ENCODE measurements at regions of chr7 and their contacts with region 1.

Region 1: DNA sequence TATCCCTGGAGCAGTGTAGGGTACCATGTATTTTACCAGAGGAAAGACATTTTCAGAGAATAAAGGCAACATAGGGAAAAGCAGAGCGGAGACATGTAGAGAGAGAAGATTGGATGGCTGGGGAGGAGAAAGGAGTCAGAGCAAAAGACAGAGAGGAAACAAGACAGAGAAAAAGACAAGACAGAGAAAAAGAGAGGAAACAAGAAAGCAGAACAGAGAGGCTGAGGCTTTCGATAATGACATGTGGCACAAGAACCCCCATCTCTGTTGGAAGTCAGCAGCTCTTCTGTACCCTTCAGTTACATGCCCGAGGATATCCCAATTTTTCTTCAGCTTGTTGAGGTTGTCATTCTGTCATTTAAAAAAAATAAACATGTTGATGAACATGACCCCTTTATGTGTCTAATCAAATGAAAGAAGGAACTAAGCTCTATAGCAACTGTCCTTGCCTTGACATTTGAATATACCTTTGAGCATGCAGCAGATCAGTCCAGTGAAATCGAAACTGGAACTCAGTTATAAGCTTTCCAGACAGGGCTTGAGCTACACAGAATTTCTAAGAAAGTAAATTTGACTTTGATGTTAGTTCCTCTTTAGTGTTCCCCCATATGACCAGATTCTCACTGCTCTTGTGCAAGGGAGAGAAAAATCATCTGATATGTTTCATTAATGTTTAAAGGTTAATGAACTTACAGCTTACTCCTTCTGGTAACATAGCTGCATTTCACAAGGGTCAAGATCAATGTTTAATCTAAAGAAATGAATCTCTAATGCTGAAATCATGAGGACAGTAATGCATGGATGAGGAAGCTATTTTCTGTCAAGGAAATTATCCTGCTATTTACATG is 75.1 kb upstream of the SP4 start:
- DNase-seq: no peak
- H3K4me3 Mint-ChIP-seq: no peak overlapping the region
- H3K27ac Mint-ChIP-seq: peak overlapping the region; percentile 24
- H3K4me1 Mint-ChIP-seq: peaks cover 46% of the 10 kb centered on the region
- H3K27me3 Mint-ChIP-seq: no peaks in the 10 kb centered on the region

Region 2: DNA sequence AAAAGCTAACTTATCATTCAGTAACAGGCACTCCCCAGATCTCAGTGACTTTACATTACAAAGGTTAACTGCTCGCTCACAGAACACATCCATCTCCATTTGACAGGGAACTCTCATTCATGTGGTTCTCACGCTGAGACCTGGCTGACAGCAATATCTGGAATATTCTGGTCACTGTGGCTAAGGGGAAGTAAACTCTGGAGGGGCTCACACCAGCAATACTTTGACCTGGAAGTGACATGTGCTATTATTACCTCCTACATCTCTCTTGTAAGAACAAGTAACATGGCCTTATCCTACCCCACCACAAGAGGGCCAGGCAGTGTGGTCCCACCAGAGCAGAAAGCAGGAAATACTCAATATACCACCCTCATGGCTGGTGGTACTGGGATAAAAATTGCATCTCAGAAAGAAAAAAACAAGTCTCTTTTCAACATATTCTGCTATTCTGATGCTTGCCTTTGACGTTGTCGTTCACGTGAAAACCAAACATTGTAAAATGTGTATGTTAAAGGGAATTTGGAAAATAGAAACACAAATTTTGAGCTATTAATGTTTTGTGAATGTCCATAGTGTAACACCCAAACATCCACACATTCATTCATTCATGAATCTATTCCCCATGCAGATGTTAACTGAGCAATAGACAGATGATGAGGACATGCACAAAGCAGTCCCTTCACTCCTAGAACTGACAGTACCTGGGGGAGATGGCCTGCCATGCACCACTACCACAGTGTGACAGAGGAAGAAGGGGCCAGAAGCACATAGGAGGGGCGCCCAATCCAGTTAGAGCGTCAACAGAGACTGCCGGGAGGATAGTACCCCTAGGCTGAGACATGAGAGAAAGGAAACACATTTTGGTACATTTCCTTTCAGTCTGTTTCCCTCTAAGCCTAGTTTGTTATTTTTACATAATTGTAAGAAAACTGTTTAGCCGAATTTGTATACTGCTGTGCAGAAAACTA is 90.9 kb before region 1 on chr7:
- CTCF ChIA-PET with region 1: no interaction called
- intact Hi-C with region 1: loop called (anchors 5 kb)
- DNase-seq: peak; percentile 62
- H3K4me3 Mint-ChIP-seq: no peak overlapping the region
- H3K27ac Mint-ChIP-seq: no peak overlapping the region
- H3K4me1 Mint-ChIP-seq: peaks cover 7% of the 10 kb centered on the region
- H3K27me3 Mint-ChIP-seq: peaks cover 9% of the 10 kb centered on the region

Region 3: GRCh38 chr7:21300692-21301091 is 52.1 kb before region 1 on chr7:
- CTCF ChIA-PET with region 1: no interaction called
- intact Hi-C with region 1: loop called (anchors 1 kb)
- DNase-seq: no peak
- H3K4me3 Mint-ChIP-seq: no peak overlapping the region
- H3K27ac Mint-ChIP-seq: no peak overlapping the region
- H3K4me1 Mint-ChIP-seq: peaks cover 12% of the 10 kb centered on the region
- H3K27me3 Mint-ChIP-seq: no peaks in the 10 kb centered on the region

Region 4: GRCh38 chr7:21338728-21339164 is 14.0 kb before region 1 on chr7:
- CTCF ChIA-PET with region 1: interaction called, 5 read pairs
- intact Hi-C with region 1: loop called (anchors 1 kb)
- DNase-seq: peak; percentile 80
- H3K4me3 Mint-ChIP-seq: peak overlapping the region; percentile 1
- H3K27ac Mint-ChIP-seq: peak overlapping the region; percentile 94
- H3K4me1 Mint-ChIP-seq: peaks cover 20% of the 10 kb centered on the region
- H3K27me3 Mint-ChIP-seq: no peaks in the 10 kb centered on the region

Region 5: DNA sequence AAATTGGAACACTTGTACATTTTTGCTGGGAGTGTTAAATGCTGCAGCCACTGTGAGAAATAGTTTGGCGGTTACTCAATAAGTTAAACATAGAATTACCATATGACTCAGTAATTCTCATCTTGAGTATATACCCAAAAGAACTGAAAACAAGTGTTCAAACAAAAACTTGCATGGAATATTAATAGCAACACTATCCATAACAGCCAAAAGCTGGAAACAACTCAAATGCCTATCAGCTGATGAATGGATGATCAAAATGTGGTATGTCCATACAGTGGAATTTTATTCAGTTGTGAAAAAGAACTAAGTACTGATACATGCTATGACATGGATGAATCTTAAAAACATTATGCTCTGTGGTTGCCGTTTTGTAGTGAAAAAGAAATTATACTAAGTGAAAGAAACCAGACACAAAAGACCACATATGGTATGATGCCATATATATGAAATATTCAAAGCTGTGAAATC is 12.1 kb after region 1 on chr7:
- CTCF ChIA-PET with region 1: interaction called, 8 read pairs
- intact Hi-C with region 1: loop called (anchors 1 kb)
- DNase-seq: no peak
- H3K4me3 Mint-ChIP-seq: no peak overlapping the region
- H3K27ac Mint-ChIP-seq: no peak overlapping the region
- H3K4me1 Mint-ChIP-seq: peaks cover 27% of the 10 kb centered on the region
- H3K27me3 Mint-ChIP-seq: no peaks in the 10 kb centered on the region

Region 6: DNA sequence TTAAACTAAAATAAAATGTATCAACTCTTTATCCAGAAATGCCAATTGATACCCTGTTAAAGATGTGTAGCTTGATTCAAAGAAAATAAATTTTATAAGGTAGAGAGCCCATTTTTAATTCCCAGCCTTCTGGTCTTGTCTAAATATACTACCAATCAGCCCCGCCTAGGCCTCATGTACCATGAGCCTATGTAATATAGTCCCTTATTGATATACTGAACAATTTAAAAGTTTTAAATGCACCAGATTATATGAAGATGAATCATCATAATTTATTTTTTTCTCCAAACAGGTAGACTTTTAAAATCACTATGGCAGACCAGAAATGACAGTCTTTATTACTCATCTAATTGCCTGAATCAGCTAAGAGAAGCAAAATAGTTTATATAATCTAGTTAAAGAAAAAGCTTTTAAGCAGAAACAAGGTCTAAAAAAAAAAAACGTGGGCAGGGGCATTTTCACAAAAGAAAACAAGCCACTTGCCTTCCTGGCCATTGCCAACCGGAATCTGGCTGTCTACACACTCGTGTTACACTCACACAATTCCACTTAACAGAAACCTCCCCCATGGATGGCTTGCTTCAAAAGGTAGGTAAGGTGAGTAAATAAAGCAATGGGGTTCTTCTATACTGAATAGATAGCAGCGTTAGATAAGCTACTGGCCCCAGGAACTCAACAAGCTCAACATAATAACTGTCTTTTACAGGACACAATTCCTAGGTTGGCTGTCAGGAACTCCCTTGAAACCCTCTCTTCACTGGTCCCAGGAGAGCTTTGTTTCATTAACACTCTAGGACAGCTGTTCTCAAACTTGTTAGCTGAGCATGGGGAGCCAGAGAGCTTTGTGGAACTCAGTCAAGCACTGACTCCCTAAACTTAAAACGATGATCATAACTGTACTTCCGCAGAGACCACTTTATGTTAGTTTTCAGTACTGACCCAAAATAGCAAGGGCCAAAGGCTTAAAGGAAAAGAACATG is 967.0 kb after region 1 on chr7:
- CTCF ChIA-PET with region 1: no interaction called
- intact Hi-C with region 1: no loop called
- DNase-seq: no peak
- H3K4me3 Mint-ChIP-seq: no peak overlapping the region
- H3K27ac Mint-ChIP-seq: no peak overlapping the region
- H3K4me1 Mint-ChIP-seq: no peaks in the 10 kb centered on the region
- H3K27me3 Mint-ChIP-seq: peaks cover 3% of the 10 kb centered on the region

Region 7: DNA sequence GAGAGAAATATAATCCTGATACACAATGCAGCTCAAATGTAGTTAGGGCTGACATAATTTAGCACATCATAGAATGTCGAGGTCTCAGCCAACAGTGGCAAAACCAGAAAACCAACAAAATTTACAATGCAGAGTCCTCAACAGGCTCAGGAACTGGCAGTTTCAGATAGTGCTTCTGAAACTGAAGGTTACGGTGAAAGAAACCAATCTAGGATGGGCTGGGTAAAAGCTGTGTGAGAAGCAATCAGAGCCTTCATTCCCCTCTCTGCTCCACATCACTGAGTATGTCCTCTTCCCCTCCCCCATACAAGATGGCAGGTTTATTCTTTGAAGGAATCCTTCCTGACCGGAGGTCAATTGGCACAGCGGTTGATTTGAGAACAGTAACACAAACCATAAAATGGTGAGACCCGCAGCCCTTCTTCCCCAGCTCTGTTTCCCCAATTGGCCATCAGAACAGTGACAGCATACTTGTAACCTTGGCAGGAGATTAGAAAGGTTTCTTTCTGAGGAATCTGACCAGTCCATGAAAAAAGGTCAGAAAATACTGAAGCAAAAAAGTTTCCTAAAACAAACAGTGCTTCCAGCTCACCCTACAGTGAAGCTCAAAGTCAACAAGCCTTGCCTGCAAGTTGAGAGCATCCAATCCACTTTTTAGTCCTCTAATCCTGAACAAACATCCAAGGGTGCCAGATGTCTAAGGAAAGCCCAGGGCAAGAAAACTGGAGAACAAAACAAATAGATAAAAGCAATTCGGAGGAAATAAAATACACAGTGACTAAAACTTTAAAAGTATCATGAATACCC is 1320.3 kb after region 1 on chr7:
- CTCF ChIA-PET with region 1: no interaction called
- intact Hi-C with region 1: loop called (anchors 2 kb)
- DNase-seq: no peak
- H3K4me3 Mint-ChIP-seq: no peak overlapping the region
- H3K27ac Mint-ChIP-seq: no peak overlapping the region
- H3K4me1 Mint-ChIP-seq: peaks cover 64% of the 10 kb centered on the region
- H3K27me3 Mint-ChIP-seq: no peaks in the 10 kb centered on the region

Measured in activated naive CD4-positive, alpha-beta T cell treated with anti-CD3 and anti-CD28 coated beads for 36 hours (primary cell).